ENCODE measurements at regions of chr11 and their contacts with region 1.

Region 1: GRCh38 chr11:118552341-118552740 is 13.4 kb downstream of the IFT46 start:
- DNase-seq: no peak
- ATAC-seq: no peak
- H3K4me3 ChIP-seq: no peak overlapping the region
- H3K27ac ChIP-seq: no peak overlapping the region
- H3K4me1 ChIP-seq: no peaks in the 10 kb centered on the region
- H3K27me3 ChIP-seq: no peaks in the 10 kb centered on the region
- CTCF ChIP-seq: no peak

Region 2: DNA sequence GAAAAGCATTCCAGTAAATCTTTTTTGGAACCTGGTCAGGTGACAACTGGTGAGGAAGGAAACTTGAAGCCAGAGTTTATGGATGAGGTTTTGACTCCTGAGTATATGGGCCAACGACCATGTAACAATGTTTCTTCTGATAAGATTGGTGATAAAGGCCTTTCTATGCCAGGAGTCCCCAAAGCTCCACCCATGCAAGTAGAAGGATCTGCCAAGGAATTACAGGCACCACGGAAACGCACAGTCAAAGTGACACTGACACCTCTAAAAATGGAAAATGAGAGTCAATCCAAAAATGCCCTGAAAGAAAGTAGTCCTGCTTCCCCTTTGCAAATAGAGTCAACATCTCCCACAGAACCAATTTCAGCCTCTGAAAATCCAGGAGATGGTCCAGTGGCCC is 49.1 kb before region 1 on chr11:
- CTCF ChIA-PET with region 1: interaction called, 13 read pairs
- POLR2A ChIA-PET with region 1: no interaction called
- in situ Hi-C with region 1: no loop called
- intact Hi-C with region 1: no loop called
- DNase-seq: no peak
- ATAC-seq: no peak
- H3K4me3 ChIP-seq: no peak overlapping the region
- H3K27ac ChIP-seq: no peak overlapping the region
- H3K4me1 ChIP-seq: no peaks in the 10 kb centered on the region
- H3K27me3 ChIP-seq: no peaks in the 10 kb centered on the region
- CTCF ChIP-seq: no peak

Region 3: DNA sequence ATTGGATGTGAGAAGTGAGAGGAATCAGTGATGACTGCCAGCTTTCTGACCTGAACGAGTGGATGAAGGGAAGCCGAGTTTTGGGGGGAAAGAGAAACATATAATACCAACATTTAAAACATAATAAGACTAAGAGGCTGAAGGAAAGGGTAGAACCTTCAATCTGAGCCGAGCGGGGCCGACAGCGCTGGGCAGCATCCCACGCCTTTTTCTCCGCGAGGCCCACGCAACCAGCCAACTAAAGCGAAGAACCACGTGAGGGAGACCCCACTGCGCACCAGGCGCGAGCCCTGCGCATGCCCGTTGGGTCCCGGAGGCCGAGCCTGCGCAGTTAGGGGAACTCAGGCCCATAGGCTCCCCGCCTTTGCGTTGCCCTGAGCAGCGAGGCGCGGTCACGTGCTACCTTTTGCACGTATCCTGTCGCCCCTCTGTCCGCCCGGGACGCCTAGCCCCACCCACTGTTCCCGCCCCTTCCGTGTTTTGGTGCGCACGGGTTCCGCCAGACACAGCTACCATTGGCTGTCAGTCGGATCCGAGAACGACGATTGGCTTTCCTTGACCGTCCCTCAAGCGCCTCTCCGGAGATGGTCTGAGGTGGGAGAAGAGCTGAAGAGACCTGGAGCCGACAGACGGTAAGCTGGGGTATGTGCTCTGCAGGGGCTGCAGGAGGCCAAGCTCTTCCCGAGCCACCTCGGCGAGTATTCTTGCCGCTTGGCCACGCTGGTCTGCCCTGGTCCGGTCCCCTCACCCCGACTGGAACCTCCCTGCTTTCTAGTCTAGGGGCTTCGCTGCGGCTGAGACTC is 568.9 kb after region 1 on chr11 and contains the start of gene HINFP:
- CTCF ChIA-PET with region 1: no interaction called
- POLR2A ChIA-PET with region 1: no interaction called
- in situ Hi-C with region 1: no loop called
- intact Hi-C with region 1: no loop called
- DNase-seq: peak; percentile 94
- ATAC-seq: peak; percentile 99
- H3K4me3 ChIP-seq: peak within 1 kb of the TSS; percentile 79 to 87
- H3K27ac ChIP-seq: peak within 1 kb of the TSS; percentile 96
- H3K4me1 ChIP-seq: peaks cover 12% of the 10 kb centered on the region
- H3K27me3 ChIP-seq: no peaks in the 10 kb centered on the region
- CTCF ChIP-seq: no peak
- total RNA-seq, gene HINFP: 52.7 TPM